ENCODE measurements at regions of chr11 and their contacts with region 1.

Region 1: GRCh38 chr11:90840071-90840470 is 617.2 kb upstream of the CHORDC1 start:
- DNase-seq: peak in 1 of 2 experiments; percentile 74
- H3K4me3 ChIP-seq: peak overlapping the region; percentile 14
- H3K27ac ChIP-seq: peak overlapping the region; percentile 24; the same call in 1 of the 2 replicates
- H3K4me1 ChIP-seq: peaks cover 19% of the 10 kb centered on the region
- H3K27me3 ChIP-seq: no peaks in the 10 kb centered on the region
- CTCF ChIP-seq: no peak

Region 2: DNA sequence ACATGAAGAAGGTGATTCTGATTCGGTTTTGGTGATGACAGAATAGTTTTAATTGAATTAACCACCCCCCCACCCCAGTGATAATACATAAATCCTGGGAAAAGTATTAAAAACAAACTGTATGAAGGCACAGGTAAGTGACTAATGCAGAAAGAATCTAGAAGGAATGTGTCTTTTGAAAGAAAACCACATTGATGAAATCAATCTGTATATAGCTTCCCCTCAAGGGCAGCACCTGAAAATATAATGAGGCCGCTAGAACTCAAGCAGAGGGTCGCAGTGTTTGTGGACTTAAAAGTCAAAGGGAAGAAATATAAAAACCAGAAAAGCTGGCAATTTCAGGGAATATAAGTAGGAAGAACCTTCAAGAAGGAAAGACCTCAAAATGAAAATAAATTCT is 36.7 kb before region 1 on chr11:
- CTCF ChIA-PET with region 1: no interaction called
- POLR2A ChIA-PET with region 1: interaction called, 32 read pairs
- intact Hi-C with region 1: no loop called
- DNase-seq: peak; percentile 23 to 76
- H3K4me3 ChIP-seq: no peak overlapping the region
- H3K27ac ChIP-seq: peak overlapping the region; percentile 38; the same call in 1 of the 2 replicates
- H3K4me1 ChIP-seq: peaks cover 28% of the 10 kb centered on the region
- H3K27me3 ChIP-seq: no peaks in the 10 kb centered on the region
- CTCF ChIP-seq: no peak

Region 3: DNA sequence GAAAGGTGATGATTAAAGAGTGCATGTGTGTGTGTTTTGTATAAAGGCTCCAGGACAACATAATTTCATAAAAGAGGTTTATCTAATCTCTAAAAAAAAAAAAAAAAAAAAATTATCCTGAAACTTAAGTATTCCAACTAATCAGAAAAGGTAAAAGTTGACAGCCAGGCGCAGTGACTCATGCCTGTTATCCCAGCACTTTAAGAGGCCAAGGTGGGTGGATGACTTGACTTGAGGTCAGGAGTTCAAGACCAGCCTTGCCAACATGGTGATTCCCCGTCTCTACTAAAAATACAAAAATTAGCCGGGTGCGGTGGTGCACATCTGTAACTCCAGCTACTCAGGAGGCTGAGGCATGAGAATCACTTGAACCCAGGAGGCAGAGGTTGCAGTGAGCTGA is 15.5 kb after region 1 on chr11:
- CTCF ChIA-PET with region 1: no interaction called
- POLR2A ChIA-PET with region 1: no interaction called
- intact Hi-C with region 1: no loop called
- DNase-seq: no peak
- H3K4me3 ChIP-seq: no peak overlapping the region
- H3K27ac ChIP-seq: no peak overlapping the region
- H3K4me1 ChIP-seq: no peaks in the 10 kb centered on the region
- H3K27me3 ChIP-seq: no peaks in the 10 kb centered on the region
- CTCF ChIP-seq: no peak

Region 4: GRCh38 chr11:90916706-90917105 is 76.6 kb after region 1 on chr11:
- CTCF ChIA-PET with region 1: no interaction called
- POLR2A ChIA-PET with region 1: no interaction called
- intact Hi-C with region 1: no loop called
- DNase-seq: no peak
- H3K4me3 ChIP-seq: no peak overlapping the region
- H3K27ac ChIP-seq: no peak overlapping the region
- H3K4me1 ChIP-seq: no peaks in the 10 kb centered on the region
- H3K27me3 ChIP-seq: no peaks in the 10 kb centered on the region
- CTCF ChIP-seq: no peak

Region 5: DNA sequence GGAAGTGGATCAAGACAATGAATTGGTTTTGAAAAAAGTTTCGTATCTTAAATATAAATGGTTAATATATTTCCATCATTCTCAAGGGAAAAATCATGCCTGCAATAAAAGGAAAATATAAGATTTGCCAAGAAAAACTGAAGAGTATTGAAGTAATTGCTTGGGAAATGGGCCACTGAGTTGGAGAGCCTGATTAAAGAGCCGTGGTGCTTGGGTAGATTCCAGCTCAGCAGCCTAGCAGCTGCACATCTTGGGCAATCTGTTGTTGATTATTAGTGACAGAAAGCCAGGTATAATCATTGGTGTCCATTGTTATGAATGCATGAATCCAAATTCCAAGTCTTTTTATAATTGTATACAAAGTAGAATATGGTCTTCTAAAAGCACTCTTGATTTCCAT is 183.7 kb after region 1 on chr11:
- CTCF ChIA-PET with region 1: no interaction called
- POLR2A ChIA-PET with region 1: no interaction called
- intact Hi-C with region 1: no loop called
- DNase-seq: no peak
- H3K4me3 ChIP-seq: no peak overlapping the region
- H3K27ac ChIP-seq: no peak overlapping the region
- H3K4me1 ChIP-seq: no peaks in the 10 kb centered on the region
- H3K27me3 ChIP-seq: no peaks in the 10 kb centered on the region
- CTCF ChIP-seq: no peak

Region 6: GRCh38 chr11:91104237-91104636 is 264.2 kb after region 1 on chr11:
- CTCF ChIA-PET with region 1: no interaction called
- POLR2A ChIA-PET with region 1: no interaction called
- intact Hi-C with region 1: no loop called
- DNase-seq: peak; percentile 15 to 75
- H3K4me3 ChIP-seq: no peak overlapping the region
- H3K27ac ChIP-seq: peak overlapping the region; percentile 18; the same call in 1 of the 2 replicates
- H3K4me1 ChIP-seq: peaks cover 22% of the 10 kb centered on the region
- H3K27me3 ChIP-seq: no peaks in the 10 kb centered on the region
- CTCF ChIP-seq: no peak